ENCODE measurements at regions of chr9 and their contacts with region 1.

Region 1: GRCh38 chr9:90102292-90102901 is 497.6 kb downstream of the GADD45G start:
- DNase-seq: peak; percentile 71 to 75
- H3K4me3 ChIP-seq: no peak overlapping the region
- H3K27ac ChIP-seq: no peak overlapping the region
- H3K4me1 ChIP-seq: no peaks in the 10 kb centered on the region
- H3K27me3 ChIP-seq: peaks cover 58% of the 10 kb centered on the region
- CTCF ChIP-seq: peak; percentile 72

Region 2: GRCh38 chr9:90801583-90802289 is 699.3 kb after region 1 on chr9 and contains the start of gene SYK:
- CTCF ChIA-PET with region 1: interaction called, 20 read pairs
- POLR2A ChIA-PET with region 1: no interaction called
- intact Hi-C with region 1: no loop called
- DNase-seq: peak; percentile 62 to 74
- H3K4me3 ChIP-seq: peak within 1 kb of the TSS; percentile 91
- H3K27ac ChIP-seq: peak within 1 kb of the TSS; percentile 53
- H3K4me1 ChIP-seq: peaks cover 12% of the 10 kb centered on the region
- H3K27me3 ChIP-seq: no peaks in the 10 kb centered on the region
- CTCF ChIP-seq: no peak
- total RNA-seq, gene SYK: 23.3 and 32.1 TPM in 2 replicates

Measured in PC-9 (cell line).